Activated CD4-positive, alpha-beta memory T cell treated with anti-CD3 and anti-CD28 coated beads, Interleukin-2, amount 10 ng/mL, durations not matched to agents 7 days and 5 days (primary cell): ENCODE measurements at regions of chr1 and their contacts with region 1.

Region 1: DNA sequence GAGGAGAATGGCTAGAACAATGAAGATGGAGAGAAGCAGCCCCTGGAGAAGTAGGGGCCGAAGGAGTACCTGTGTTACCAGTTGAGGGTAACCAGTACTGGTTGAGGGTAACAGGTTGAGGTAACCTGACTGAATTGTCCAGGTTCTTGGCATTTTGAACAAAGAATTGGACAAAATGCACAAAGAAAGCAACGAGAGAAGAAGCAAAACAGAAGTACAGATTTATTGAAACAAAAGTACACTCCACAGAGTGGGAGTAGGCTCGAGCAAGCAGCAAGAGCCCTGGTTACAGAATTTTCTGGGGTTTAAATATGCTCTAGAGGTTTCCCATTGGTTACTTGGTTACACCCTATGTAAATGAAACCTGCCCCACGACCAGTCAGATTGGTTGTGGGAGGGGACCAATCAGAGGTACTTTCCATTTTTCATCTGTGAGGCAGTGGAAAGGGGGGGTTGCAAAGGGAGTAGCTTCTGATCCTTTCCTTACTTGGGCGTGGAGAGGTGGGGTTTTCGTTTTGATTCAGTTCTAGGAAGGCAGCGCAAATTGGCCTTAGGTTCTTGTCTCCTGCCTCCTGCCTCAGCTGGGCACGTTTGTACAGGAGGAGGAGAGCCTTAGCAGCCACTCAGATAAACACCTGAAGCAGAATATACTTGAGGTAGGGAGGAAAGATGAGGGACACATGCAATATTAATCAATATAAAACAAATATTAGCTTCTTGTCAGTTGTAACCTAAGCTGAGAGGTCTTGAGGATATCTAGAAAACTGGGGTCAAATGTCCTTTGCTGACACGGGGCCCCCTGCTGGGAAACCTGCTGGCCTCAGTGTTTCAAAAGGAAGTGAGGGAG is 14.2 kb upstream of the LSM10 start:
- DNase-seq: peak; percentile 70
- H3K4me3 Mint-ChIP-seq: peak overlapping the region; percentile 10
- H3K27ac Mint-ChIP-seq: peak overlapping the region; percentile 95
- H3K4me1 Mint-ChIP-seq: peaks cover 30% of the 10 kb centered on the region
- H3K27me3 Mint-ChIP-seq: no peaks in the 10 kb centered on the region

Region 2: GRCh38 chr1:36342481-36343478 is 69.1 kb before region 1 on chr1:
- CTCF ChIA-PET with region 1: interaction called, 31 read pairs
- POLR2A ChIA-PET with region 1: interaction called, 3 read pairs
- DNase-seq: peak; percentile 57
- H3K4me3 Mint-ChIP-seq: no peak overlapping the region
- H3K27ac Mint-ChIP-seq: peak overlapping the region; percentile 41
- H3K4me1 Mint-ChIP-seq: peaks cover 19% of the 10 kb centered on the region
- H3K27me3 Mint-ChIP-seq: no peaks in the 10 kb centered on the region

Region 3: DNA sequence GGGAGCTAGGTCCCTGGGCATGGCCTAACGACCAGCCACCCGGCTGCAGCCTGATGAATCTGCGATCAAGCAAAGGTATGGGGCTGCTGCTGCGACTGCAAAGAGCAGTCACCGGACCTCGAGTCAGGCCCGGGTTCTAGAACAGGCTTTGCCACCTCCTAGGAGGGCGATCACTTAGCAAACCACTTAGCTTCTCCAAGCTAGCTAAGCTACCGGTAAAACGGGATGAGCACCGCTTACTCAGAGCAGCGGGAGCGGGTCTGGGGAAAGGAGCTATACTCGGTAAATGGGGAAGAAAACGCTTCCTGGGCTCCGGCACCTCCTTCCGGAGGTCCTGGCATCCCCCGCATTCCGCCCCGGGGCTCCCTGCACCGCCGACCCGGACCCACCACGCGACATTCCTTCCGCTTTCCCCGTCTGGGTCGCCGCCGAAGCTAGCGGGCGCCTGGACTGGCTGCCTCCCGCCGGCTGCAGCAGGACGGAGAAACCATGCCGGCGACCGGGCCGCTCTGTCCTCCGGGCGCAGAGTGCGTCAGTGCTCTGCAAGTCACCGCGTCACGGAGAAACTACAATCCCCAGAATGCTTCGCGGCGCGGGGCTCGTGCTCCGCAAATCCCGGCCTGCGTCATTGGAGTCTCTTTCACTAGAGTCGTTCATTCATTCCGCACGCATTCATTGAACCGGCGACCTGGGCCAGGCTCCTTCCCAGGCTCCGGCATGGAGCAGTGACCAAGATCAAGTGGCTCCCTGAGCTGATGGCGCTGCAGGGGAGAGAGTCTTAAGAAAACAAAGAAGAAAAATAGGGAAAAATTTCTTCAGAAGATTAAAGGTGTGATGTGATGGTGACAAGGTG is 14.3 kb before region 1 on chr1 and contains the start of gene LSM10:
- CTCF ChIA-PET with region 1: interaction called, 10 read pairs
- POLR2A ChIA-PET with region 1: interaction called, 14 read pairs
- DNase-seq: peak; percentile 93
- H3K4me3 Mint-ChIP-seq: peak within 1 kb of the TSS; percentile 95
- H3K27ac Mint-ChIP-seq: peak within 1 kb of the TSS; percentile 95
- H3K4me1 Mint-ChIP-seq: peaks cover 50% of the 10 kb centered on the region
- H3K27me3 Mint-ChIP-seq: no peaks in the 10 kb centered on the region
- total RNA-seq, gene LSM10: 41.4 TPM

Region 4: DNA sequence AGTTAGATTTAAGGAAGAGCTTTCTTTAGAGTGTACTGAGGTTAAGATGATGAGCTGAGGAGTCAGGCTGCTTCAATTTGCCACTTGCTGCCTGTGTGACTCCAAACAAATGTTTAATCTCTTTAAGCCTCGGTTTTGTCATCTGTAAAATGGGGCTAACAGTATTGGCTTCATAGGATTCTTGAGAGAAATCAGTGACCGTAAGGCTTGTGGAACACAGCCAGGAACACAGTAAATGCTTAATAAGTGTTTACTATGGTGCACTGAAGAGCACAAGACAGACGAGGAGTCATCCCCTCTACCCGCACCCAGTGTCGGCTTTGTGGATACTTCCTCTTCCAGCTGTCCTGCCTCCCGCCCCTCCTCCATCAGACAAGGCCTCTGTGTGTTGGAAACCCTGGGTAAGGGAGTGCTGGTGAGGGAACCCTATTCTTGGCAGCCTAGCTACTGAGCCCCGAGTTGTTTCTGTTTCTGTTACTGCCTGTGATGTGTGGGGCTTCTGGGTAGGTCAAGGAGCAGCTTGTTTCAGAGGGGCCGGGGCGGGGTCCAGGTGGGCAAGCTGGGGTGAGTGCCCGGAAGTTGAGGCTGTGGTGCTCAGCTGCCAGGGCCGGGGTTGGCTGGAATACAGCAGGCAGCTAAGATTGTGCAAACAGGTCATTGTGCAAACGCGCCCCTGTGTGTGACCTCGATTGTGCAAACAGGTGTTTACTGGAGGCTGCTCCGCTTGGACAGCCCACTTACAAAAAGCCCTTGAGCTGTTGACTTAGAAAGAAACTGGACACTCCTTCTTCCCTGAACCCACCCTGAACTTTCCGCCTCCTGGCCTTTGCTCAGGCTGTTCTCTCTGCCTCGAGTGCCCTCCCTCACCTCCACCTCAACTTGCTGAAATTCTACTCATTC is 74.8 kb after region 1 on chr1:
- CTCF ChIA-PET with region 1: no interaction called
- POLR2A ChIA-PET with region 1: no interaction called
- DNase-seq: no peak
- H3K4me3 Mint-ChIP-seq: no peak overlapping the region
- H3K27ac Mint-ChIP-seq: no peak overlapping the region
- H3K4me1 Mint-ChIP-seq: peaks cover 9% of the 10 kb centered on the region
- H3K27me3 Mint-ChIP-seq: peaks cover 12% of the 10 kb centered on the region

Region 5: GRCh38 chr1:36638268-36638667 is 226.4 kb after region 1 on chr1:
- CTCF ChIA-PET with region 1: no interaction called
- POLR2A ChIA-PET with region 1: no interaction called
- DNase-seq: no peak
- H3K4me3 Mint-ChIP-seq: no peak overlapping the region
- H3K27ac Mint-ChIP-seq: no peak overlapping the region
- H3K4me1 Mint-ChIP-seq: no peaks in the 10 kb centered on the region
- H3K27me3 Mint-ChIP-seq: peaks cover 9% of the 10 kb centered on the region